CD4-positive, alpha-beta memory T cell (primary cell): ENCODE measurements at regions of chr14 and their contacts with region 1.

Region 1: GRCh38 chr14:69242311-69243224 is 17.4 kb upstream of the GALNT16 start:
- DNase-seq: peak; percentile 47 to 58 (median 55)
- H3K4me3 ChIP-seq: no peak overlapping the region
- H3K4me3 Mint-ChIP-seq: no peak overlapping the region
- H3K27ac ChIP-seq: no peak overlapping the region
- H3K27ac Mint-ChIP-seq: no peak overlapping the region
- H3K4me1 ChIP-seq: no peaks in the 10 kb centered on the region
- H3K4me1 Mint-ChIP-seq: peaks cover 1 to 6% (median 5%) of the 10 kb centered on the region in 4 donors
- H3K27me3 ChIP-seq: no peaks in the 10 kb centered on the region
- H3K27me3 Mint-ChIP-seq: no peaks in the 10 kb centered on the region

Region 2: GRCh38 chr14:69226178-69226577 is 16.4 kb before region 1 on chr14:
- CTCF ChIA-PET with region 1: interaction called, 10 read pairs
- POLR2A ChIA-PET with region 1: no interaction called
- intact Hi-C with region 1: no loop called
- DNase-seq: no peak
- H3K4me3 ChIP-seq: no peak overlapping the region
- H3K4me3 Mint-ChIP-seq: no peak overlapping the region
- H3K27ac ChIP-seq: no peak overlapping the region
- H3K27ac Mint-ChIP-seq: peak overlapping the region in 1 of 7 donors; percentile 9
- H3K4me1 ChIP-seq: no peaks in the 10 kb centered on the region
- H3K4me1 Mint-ChIP-seq: no peaks in the 10 kb centered on the region
- H3K27me3 ChIP-seq: no peaks in the 10 kb centered on the region
- H3K27me3 Mint-ChIP-seq: no peaks in the 10 kb centered on the region

Region 3: GRCh38 chr14:69232388-69232787 is 10.2 kb before region 1 on chr14:
- CTCF ChIA-PET with region 1: interaction called, 24 read pairs
- POLR2A ChIA-PET with region 1: no interaction called
- intact Hi-C with region 1: no loop called
- DNase-seq: no peak
- H3K4me3 ChIP-seq: no peak overlapping the region
- H3K4me3 Mint-ChIP-seq: no peak overlapping the region
- H3K27ac ChIP-seq: no peak overlapping the region
- H3K27ac Mint-ChIP-seq: no peak overlapping the region
- H3K4me1 ChIP-seq: no peaks in the 10 kb centered on the region
- H3K4me1 Mint-ChIP-seq: no peaks in the 10 kb centered on the region
- H3K27me3 ChIP-seq: no peaks in the 10 kb centered on the region
- H3K27me3 Mint-ChIP-seq: no peaks in the 10 kb centered on the region

Region 4: GRCh38 chr14:69299286-69300035 is 56.9 kb after region 1 on chr14:
- CTCF ChIA-PET with region 1: no interaction called
- POLR2A ChIA-PET with region 1: no interaction called
- intact Hi-C with region 1: no loop called
- DNase-seq: no peak
- H3K4me3 ChIP-seq: no peak overlapping the region
- H3K4me3 Mint-ChIP-seq: no peak overlapping the region
- H3K27ac ChIP-seq: no peak overlapping the region
- H3K27ac Mint-ChIP-seq: peak overlapping the region in 2 of 7 donors; percentile 4 to 19
- H3K4me1 ChIP-seq: no peaks in the 10 kb centered on the region
- H3K4me1 Mint-ChIP-seq: no peaks in the 10 kb centered on the region
- H3K27me3 ChIP-seq: no peaks in the 10 kb centered on the region
- H3K27me3 Mint-ChIP-seq: peaks cover 3 to 8% of the 10 kb centered on the region in 2 donors

Region 5: DNA sequence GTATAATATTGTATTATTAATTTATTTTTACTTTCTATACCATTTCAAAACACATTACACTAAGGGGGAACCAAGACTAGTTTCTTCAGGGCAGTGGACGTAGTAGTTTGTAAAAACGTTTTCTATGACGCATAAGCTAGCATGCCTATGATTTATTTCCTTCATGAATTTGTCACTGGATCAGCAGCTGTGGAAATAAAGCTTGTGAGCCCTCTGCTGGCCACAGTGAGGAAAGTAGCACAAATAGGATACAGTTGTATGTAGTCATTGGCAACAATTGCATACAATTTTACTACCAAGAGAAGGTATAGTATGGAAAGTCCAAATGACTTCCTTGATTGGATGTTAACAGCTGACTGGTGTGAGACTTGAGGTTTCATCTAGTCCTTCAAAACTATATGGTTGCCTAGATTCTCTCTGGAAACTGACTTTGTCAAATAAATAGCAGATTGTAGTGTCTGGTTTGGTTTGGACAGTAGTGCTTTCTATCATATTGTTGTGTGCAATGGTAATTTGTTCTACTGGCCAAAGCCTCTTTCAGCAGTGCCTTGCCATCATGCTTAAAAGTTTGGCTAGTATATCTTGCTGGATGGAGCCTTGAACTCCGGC is 217.6 kb after region 1 on chr14:
- CTCF ChIA-PET with region 1: interaction called, 75 read pairs
- POLR2A ChIA-PET with region 1: interaction called, 3 read pairs
- intact Hi-C with region 1: no loop called
- DNase-seq: peak; percentile 42 to 51 (median 49)
- H3K4me3 ChIP-seq: no peak overlapping the region
- H3K4me3 Mint-ChIP-seq: no peak overlapping the region
- H3K27ac ChIP-seq: no peak overlapping the region
- H3K27ac Mint-ChIP-seq: no peak overlapping the region
- H3K4me1 ChIP-seq: no peaks in the 10 kb centered on the region
- H3K4me1 Mint-ChIP-seq: no peaks in the 10 kb centered on the region
- H3K27me3 ChIP-seq: no peaks in the 10 kb centered on the region
- H3K27me3 Mint-ChIP-seq: no peaks in the 10 kb centered on the region

Region 6: DNA sequence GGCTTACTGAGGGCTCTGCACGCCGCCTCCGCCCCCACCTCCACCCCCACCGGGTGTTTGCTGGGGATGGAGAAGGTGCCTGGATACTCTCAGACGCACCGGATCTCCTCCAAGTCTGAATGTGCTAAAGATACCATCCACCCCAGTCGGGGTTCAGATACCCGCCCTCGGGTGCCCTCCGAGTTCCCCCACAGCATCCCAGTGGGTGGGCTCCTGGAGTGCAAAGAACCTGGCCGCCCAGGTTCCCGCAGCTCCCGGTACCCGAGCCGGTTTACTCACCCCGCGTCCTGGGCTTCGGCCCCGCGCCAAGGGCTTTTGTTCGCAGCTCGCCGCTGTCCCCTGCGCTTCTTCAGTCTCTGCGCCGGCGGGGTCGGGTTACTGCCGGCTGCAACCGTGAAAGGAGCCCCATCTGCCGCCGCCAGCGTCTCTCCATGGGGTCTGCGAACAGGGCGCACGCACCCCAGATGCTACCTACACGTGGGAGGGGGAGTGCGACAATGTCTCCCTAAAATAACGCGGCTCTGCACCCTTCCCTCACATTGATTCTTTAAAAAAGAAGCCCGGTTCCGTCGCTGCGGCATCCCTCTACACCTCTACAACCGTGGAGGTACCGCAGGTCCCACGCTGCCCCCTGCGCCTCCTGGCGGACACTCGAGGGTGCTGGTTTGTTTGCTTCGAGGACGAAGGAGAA is 331.8 kb after region 1 on chr14 and contains the start of gene CCDC177:
- CTCF ChIA-PET with region 1: interaction called, 36 read pairs
- POLR2A ChIA-PET with region 1: no interaction called
- intact Hi-C with region 1: loop called (anchors 1 kb)
- DNase-seq: peak; percentile 63 to 73 (median 65)
- H3K4me3 ChIP-seq: peak within 1 kb of the TSS in 1 of 2 donors; percentile 48
- H3K4me3 Mint-ChIP-seq: peak within 1 kb of the TSS; percentile 83 to 95 (median 90)
- H3K27ac ChIP-seq: no peak within 1 kb of the TSS
- H3K27ac Mint-ChIP-seq: peak within 1 kb of the TSS in 1 of 7 donors; percentile 61
- H3K4me1 ChIP-seq: peaks cover 13% of the 10 kb centered on the region
- H3K4me1 Mint-ChIP-seq: peaks cover 6 to 29% (median 11%) of the 10 kb centered on the region in 4 donors
- H3K27me3 ChIP-seq: peaks cover 23% of the 10 kb centered on the region
- H3K27me3 Mint-ChIP-seq: peaks cover 36% of the 10 kb centered on the region in 2 donors
- total RNA-seq, gene CCDC177: not detected